Dorsolateral prefrontal cortex (tissue), 120 donors: ENCODE measurements at regions of chr11 and their contacts with region 1.

Region 1: DNA sequence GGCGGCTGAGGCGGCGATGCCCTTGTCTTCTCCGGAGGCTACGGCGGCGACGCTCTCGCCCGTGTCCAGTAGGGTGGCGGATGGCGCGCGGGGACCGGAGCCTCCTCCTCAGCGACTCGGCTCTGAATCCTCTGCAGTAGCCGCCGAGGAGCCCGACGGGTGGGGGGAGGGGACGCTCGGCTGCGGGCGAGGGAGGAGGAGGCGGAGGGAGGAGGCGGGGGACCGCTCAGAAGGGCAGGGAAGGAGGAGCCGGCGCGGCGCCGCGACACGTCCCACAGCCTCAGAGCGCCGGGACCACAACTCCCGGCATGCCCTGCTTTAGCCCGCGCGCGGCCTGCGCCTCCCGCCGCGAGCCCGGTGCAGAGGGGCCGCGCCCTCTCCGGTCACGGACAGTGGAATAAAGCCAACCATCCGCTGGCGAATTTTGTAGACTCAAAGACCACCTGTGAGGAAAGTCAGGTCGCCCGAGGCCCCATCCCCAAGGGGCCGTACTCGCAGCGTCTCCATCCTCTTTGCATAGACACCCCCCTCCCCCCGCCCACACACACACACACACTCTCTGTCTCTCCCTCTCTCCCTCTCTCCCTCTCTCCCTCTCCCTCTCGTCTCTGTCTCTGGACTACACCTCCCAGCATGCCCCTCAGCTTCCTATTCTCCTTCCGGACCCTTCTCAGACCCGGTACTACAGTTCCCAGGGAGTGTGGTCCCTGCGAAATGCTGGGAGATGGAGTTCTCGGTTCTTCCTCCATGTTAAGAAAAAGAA is at the start of gene FAM168A:
- DNase-seq: peak; percentile 92 to 98 (median 96)
- H3K4me3 ChIP-seq: peak within 1 kb of the TSS; percentile 65 to 100 (median 87)
- H3K27ac ChIP-seq: peak within 1 kb of the TSS; percentile 81 to 98 (median 94)
- H3K27me3 ChIP-seq: no peaks in the 10 kb centered on the region
- CTCF ChIP-seq: peak in 38 of 56 donors; percentile 1 to 47 (median 20)
- total RNA-seq, gene FAM168A: 120 to 211 (median 149) TPM

Region 2: DNA sequence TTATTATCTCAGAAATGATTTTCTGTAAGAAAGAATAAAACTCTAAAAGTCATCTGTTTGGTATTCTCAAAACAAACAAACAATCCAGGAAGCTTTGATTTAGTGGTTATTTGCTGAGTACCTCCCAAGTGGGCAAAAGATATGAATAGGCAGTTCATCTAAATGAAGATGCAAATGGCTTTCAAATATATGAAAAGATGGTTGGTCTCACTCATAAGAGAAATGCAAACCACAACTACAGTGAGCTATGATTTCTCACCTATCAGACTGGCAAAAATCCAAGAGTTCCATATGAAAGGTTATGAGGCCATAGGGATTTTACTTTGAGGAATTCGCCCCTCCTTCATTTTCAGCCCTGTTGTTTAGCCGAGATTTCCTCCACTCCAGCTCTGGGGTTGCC is 391.3 kb before region 1 on chr11:
- intact Hi-C with region 1: no loop called
- DNase-seq: no peak
- H3K4me3 ChIP-seq: no peak overlapping the region
- H3K27ac ChIP-seq: no peak overlapping the region
- H3K27me3 ChIP-seq: no peaks in the 10 kb centered on the region
- CTCF ChIP-seq: no peak

Region 3: DNA sequence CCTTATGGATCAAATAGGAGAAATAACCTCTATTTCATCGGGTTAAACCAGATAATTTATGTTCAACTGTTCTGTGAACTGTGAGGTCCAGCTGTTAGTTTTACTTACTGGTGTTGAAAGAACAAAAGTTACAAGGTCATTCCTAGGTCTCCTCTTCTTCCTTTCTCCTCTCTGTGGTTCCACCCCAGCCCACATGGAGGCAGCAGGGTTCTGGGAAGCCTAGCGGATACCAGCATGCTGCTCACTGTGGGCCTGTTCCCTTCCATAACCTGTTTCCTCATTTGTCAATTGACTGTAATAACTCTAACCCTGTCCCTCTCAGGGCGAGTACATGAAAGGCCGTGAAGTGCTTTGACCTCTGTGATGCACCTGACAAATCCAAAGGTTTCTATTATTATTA is 194.1 kb before region 1 on chr11:
- intact Hi-C with region 1: loop called (anchors 1 to 5 kb)
- DNase-seq: peak in 8 of 10 donors; percentile 55 to 79 (median 72)
- H3K4me3 ChIP-seq: no peak overlapping the region
- H3K27ac ChIP-seq: peak overlapping the region in 29 of 59 donors; percentile 3 to 68 (median 37)
- H3K27me3 ChIP-seq: no peaks in the 10 kb centered on the region
- CTCF ChIP-seq: peak; percentile 32 to 88 (median 74)

Region 4: GRCh38 chr11:73463359-73463758 is 134.8 kb before region 1 on chr11:
- intact Hi-C with region 1: no loop called
- DNase-seq: no peak
- H3K4me3 ChIP-seq: no peak overlapping the region
- H3K27ac ChIP-seq: no peak overlapping the region
- H3K27me3 ChIP-seq: no peaks in the 10 kb centered on the region
- CTCF ChIP-seq: no peak

Region 5: GRCh38 chr11:73478738-73479347 is 119.3 kb before region 1 on chr11:
- intact Hi-C with region 1: loop called (anchors 5 to 10 kb)
- DNase-seq: no peak
- H3K4me3 ChIP-seq: no peak overlapping the region
- H3K27ac ChIP-seq: peak overlapping the region in 2 of 59 donors; percentile 2 to 21
- H3K27me3 ChIP-seq: no peaks in the 10 kb centered on the region
- CTCF ChIP-seq: peak in 54 of 56 donors; percentile 26 to 80 (median 62)

Region 6: DNA sequence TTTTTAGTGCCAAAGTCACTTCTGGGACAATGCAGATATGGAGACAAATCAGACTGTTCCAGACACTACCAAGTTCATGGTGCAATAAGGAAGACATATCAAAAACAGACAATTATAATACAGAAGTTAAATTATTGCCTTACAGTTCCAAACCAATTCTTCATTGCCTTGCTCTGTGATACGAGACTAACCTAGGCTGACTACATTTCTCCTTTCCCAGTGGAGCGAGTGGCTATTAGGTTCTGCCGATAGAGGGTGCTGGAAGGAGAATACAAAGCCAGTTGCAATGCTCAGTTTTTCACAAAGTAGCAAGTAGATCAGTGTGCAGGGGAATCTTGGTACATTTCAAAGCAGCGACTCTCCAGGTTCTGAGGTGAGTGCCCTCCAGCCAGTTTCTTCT is 68.0 kb before region 1 on chr11:
- intact Hi-C with region 1: loop called in 1 of 2 experiments (anchors 5 kb)
- DNase-seq: no peak
- H3K4me3 ChIP-seq: no peak overlapping the region
- H3K27ac ChIP-seq: peak overlapping the region in 2 of 59 donors; percentile 13 to 21
- H3K27me3 ChIP-seq: no peaks in the 10 kb centered on the region
- CTCF ChIP-seq: peak in 21 of 56 donors; percentile 11 to 36 (median 22)

Region 7: GRCh38 chr11:73734993-73735392 is 136.9 kb after region 1 on chr11:
- intact Hi-C with region 1: no loop called
- DNase-seq: no peak
- H3K4me3 ChIP-seq: no peak overlapping the region
- H3K27ac ChIP-seq: peak overlapping the region in 4 of 59 donors; percentile 2 to 40 (median 11)
- H3K27me3 ChIP-seq: no peaks in the 10 kb centered on the region
- CTCF ChIP-seq: no peak